CD14-positive monocyte (primary cell): ENCODE measurements at regions of chr20 and their contacts with region 1.

Region 1: GRCh38 chr20:23156170-23156841 is 70.2 kb upstream of the CD93 start:
- DNase-seq: peak; percentile 97 to 99 (median 97)
- H3K4me3 ChIP-seq: no peak overlapping the region
- H3K4me3 Mint-ChIP-seq: peak overlapping the region in 1 of 2 donors; percentile 54
- H3K27ac ChIP-seq: peak overlapping the region; percentile 83 to 100
- H3K27ac Mint-ChIP-seq: peak overlapping the region; percentile 96 to 100 (median 100)
- H3K4me1 ChIP-seq: peaks cover 96 to 100% of the 10 kb centered on the region in 2 donors
- H3K4me1 Mint-ChIP-seq: peaks cover 100% of the 10 kb centered on the region
- H3K27me3 ChIP-seq: no peaks in the 10 kb centered on the region
- H3K27me3 Mint-ChIP-seq: peaks cover 0 to 3% (median 0%) of the 10 kb centered on the region in 3 donors
- CTCF ChIP-seq: no peak

Region 2: DNA sequence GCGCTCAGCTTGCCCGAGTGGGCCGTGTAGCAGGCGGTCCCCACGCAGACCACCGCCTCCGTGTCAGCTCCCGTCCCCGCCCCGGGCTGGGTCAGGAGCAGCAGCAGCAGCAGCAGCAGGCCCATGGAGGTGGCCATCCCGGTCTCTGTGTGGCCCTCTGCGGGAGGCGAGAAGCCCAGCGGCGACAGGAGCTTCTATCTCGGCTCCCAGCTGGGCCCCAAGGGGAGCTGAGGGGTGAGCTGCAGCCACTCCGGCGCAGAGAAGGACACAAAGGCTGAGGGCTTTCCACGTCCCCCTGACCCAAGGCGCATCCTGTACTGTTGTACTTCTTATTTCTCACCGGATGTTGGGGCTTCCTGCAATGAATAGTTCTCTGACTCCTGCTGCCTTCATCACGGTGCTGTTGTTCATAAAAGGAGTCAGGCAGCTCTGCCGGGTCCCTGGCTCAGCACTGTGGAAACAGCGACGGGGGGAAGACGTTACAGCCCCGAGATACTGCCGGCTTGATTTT is 70.2 kb before region 1 on chr20 and contains the start of gene CD93:
- intact Hi-C with region 1: loop called in 1 of 2 experiments (anchors 5 kb)
- DNase-seq: peak; percentile 85 to 94 (median 86)
- H3K4me3 ChIP-seq: peak within 1 kb of the TSS; percentile 31 to 88 (median 64)
- H3K4me3 Mint-ChIP-seq: peak within 1 kb of the TSS; percentile 94 to 97
- H3K27ac ChIP-seq: peak within 1 kb of the TSS; percentile 96 to 97
- H3K27ac Mint-ChIP-seq: peak within 1 kb of the TSS; percentile 97 to 100 (median 98)
- H3K4me1 ChIP-seq: peaks cover 65 to 84% of the 10 kb centered on the region in 2 donors
- H3K4me1 Mint-ChIP-seq: peaks cover 64% of the 10 kb centered on the region
- H3K27me3 ChIP-seq: no peaks in the 10 kb centered on the region
- H3K27me3 Mint-ChIP-seq: peaks cover 0 to 7% (median 0%) of the 10 kb centered on the region in 3 donors
- CTCF ChIP-seq: no peak
- polyA plus RNA-seq, gene CD93: 26.0 to 170 (median 48.9) TPM

Region 3: DNA sequence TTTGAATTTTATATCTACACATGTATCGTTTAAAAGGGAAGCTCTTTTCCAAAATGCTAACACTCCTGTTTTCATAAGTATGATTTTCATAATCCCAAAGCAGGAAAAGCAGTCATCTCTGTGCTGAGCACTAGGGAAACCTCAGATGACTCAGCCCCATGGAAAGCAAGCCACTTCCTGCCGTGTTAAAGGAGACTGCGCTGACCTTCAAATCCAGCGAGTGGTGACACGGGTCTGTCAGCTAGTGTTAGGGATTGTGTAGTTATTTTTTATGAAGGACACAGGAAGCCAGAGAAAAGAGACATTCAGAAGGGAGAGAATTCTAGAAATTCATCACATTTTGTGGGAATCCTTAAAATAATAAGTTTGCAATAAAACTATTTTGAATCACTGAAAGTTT is 13.2 kb before region 1 on chr20:
- intact Hi-C with region 1: loop called in 1 of 2 experiments (anchors 1 kb)
- DNase-seq: peak; percentile 89 to 97 (median 97)
- H3K4me3 ChIP-seq: no peak overlapping the region
- H3K4me3 Mint-ChIP-seq: peak overlapping the region in 1 of 2 donors; percentile 74
- H3K27ac ChIP-seq: peak overlapping the region; percentile 96 to 100
- H3K27ac Mint-ChIP-seq: peak overlapping the region; percentile 95 to 100 (median 98)
- H3K4me1 ChIP-seq: peaks cover 86 to 91% of the 10 kb centered on the region in 2 donors
- H3K4me1 Mint-ChIP-seq: peaks cover 86% of the 10 kb centered on the region
- H3K27me3 ChIP-seq: no peaks in the 10 kb centered on the region
- H3K27me3 Mint-ChIP-seq: peaks cover 0 to 6% (median 0%) of the 10 kb centered on the region in 3 donors
- CTCF ChIP-seq: no peak

Region 4: DNA sequence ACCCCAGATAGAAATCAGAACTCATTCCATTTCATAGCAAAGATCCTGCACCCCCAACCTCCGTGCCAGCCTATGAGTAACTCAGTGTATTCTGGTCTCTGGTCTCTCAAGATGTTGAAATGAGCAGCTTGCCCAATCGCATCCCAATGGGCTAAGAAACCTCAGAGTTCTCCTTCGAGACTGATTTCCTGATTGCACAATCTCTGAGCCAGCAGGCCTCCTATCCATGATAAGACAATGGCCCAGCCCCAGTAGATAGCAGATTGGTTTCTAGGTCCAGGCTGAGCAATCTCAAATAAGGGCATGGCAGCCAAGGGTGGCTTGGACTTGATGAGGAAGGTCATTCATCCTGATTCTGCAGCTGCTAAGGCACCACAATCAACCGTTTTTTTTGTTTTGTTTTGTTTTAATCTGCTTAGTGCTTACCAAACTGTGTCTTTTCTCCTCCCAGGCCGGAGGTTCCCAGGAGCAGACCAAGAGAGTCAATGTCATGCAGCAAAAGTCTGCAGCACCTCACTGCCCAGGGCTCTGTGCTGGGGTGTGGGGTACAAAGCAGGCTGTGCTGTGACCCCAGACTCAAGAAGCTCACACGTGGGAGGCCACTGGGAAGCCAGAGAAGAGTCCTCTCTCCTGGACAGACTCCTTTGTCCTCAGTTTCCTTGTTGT is 69.2 kb after region 1 on chr20:
- intact Hi-C with region 1: loop called in 1 of 2 experiments (anchors 5 kb)
- DNase-seq: peak; percentile 97 to 100 (median 99)
- H3K4me3 ChIP-seq: peak overlapping the region in 1 of 3 experiments; percentile 35
- H3K4me3 Mint-ChIP-seq: peak overlapping the region in 1 of 2 donors; percentile 56
- H3K27ac ChIP-seq: peak overlapping the region; percentile 64 to 93
- H3K27ac Mint-ChIP-seq: peak overlapping the region; percentile 88 to 94 (median 93)
- H3K4me1 ChIP-seq: peaks cover 35 to 42% of the 10 kb centered on the region in 2 donors
- H3K4me1 Mint-ChIP-seq: peaks cover 39% of the 10 kb centered on the region
- H3K27me3 ChIP-seq: no peaks in the 10 kb centered on the region
- H3K27me3 Mint-ChIP-seq: peaks cover 0 to 2% (median 1%) of the 10 kb centered on the region in 3 donors
- CTCF ChIP-seq: peak; percentile 1

Region 5: GRCh38 chr20:23270382-23270911 is 114.1 kb after region 1 on chr20:
- intact Hi-C with region 1: no loop called
- DNase-seq: no peak
- H3K4me3 ChIP-seq: no peak overlapping the region
- H3K4me3 Mint-ChIP-seq: no peak overlapping the region
- H3K27ac ChIP-seq: no peak overlapping the region
- H3K27ac Mint-ChIP-seq: no peak overlapping the region
- H3K4me1 ChIP-seq: no peaks in the 10 kb centered on the region
- H3K4me1 Mint-ChIP-seq: no peaks in the 10 kb centered on the region
- H3K27me3 ChIP-seq: no peaks in the 10 kb centered on the region
- H3K27me3 Mint-ChIP-seq: peaks cover 0 to 2% (median 0%) of the 10 kb centered on the region in 3 donors
- CTCF ChIP-seq: no peak

Region 6: DNA sequence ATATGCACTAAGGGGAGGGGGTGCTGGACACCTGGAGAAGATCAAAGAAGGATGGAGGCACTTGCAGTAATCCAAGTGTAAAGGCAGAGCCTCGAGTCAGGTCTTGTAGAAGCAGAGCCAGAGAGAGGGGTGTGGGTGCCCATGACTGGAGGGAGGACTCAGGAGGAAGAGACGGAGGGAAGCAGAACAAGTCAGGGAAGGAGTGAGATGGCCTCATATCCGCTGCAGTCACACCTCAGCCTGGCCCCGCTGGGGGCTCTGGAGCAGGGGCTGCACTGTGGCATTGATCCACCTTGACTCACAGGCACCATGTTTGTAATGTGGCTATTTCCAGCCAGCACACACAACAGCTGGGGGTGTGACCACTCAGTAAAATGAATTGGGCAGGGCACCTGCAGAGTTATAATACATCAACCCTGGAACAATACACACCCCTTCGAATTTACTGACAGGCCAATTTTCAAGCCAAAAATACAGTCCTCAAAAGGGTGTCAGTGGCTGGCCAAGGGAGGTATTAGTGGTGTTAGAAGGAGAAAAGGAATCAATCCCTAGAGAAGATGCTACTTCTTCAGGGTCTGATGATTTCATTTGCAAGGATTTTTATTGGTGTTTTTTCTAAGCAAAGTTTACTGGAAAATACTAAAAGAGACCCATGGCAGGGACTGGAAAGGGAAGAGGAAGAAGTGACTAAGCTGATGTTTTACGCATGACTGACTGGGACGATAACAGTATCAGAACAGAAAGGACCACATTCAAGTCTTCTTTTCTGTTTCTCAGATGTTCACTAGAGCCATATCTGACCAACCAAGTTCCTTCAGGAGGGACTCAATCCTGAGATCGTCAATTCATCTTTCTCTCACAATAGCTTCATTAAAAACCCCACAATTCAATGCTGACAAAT is 175.4 kb after region 1 on chr20:
- intact Hi-C with region 1: loop called in 1 of 2 experiments (anchors 5 kb)
- DNase-seq: no peak
- H3K4me3 ChIP-seq: no peak overlapping the region
- H3K4me3 Mint-ChIP-seq: no peak overlapping the region
- H3K27ac ChIP-seq: no peak overlapping the region
- H3K27ac Mint-ChIP-seq: peak overlapping the region in 1 of 7 donors; percentile 65
- H3K4me1 ChIP-seq: no peaks in the 10 kb centered on the region
- H3K4me1 Mint-ChIP-seq: peaks cover 17% of the 10 kb centered on the region
- H3K27me3 ChIP-seq: no peaks in the 10 kb centered on the region
- H3K27me3 Mint-ChIP-seq: peaks cover 0 to 4% (median 2%) of the 10 kb centered on the region in 3 donors
- CTCF ChIP-seq: no peak